Dendritic cell treated with granulocyte-macrophage colony-stimulating factor and Interleukin-4, amounts not matched to agents 40 ng/mL and 50 ng/mL, for 4 days (primary cell): ENCODE measurements at regions of chr4 and their contacts with region 1.

Region 1: DNA sequence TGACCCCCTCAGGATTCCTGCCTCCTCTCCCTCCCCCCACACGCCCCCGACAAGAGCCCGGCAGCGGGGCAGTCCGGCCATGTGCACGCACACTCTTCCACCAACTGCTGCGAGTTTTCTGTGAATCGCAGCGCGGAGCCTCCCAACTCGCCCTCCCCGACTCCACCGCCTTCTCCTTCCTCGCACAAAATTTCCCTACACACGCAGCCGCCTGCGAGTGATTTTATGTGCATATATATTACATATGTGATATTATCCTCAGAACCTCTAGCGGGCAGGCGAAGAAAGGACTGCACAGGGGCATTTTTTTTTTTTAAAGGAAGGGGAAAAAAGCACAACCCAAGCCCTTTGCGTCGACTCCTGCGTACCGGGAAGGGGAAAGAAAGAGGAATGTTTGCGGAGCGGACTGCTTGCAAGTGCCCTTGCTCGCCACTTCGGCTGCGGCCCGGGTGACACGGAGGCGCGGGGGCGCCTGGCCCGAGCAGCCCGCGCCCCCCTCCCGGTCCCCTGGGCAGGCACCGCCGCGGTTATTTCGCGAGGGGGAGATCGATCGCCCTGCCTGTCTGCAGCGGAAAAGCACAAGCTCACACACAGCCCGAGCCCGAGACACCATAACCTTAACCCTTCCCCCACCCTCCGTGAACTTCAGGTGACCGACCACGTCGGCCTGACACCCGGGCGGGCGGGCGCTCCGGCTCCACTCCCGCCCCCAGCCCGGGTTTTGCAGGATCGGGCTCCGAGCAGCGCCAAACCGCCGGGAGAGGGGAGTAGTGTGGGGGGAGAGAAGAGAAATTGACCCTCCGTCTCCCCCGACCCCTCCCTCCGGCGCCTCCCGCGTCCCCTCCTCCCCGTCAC is 2.3 kb downstream of the ZNF827 start:
- H3K4me3 Mint-ChIP-seq: peak overlapping the region; percentile 96
- H3K27ac Mint-ChIP-seq: peak overlapping the region; percentile 80
- H3K4me1 Mint-ChIP-seq: peaks cover 33% of the 10 kb centered on the region
- H3K27me3 Mint-ChIP-seq: peaks cover 49% of the 10 kb centered on the region

Region 2: GRCh38 chr4:145404761-145405160 is 531.6 kb before region 1 on chr4:
- intact Hi-C with region 1: no loop called
- H3K4me3 Mint-ChIP-seq: no peak overlapping the region
- H3K27ac Mint-ChIP-seq: no peak overlapping the region
- H3K4me1 Mint-ChIP-seq: no peaks in the 10 kb centered on the region
- H3K27me3 Mint-ChIP-seq: no peaks in the 10 kb centered on the region

Region 3: GRCh38 chr4:145618932-145619638 is 317.3 kb before region 1 on chr4 and contains the start of gene MMAA:
- intact Hi-C with region 1: loop called (anchors 2 kb)
- H3K4me3 Mint-ChIP-seq: peak within 1 kb of the TSS; percentile 97
- H3K27ac Mint-ChIP-seq: peak within 1 kb of the TSS; percentile 99
- H3K4me1 Mint-ChIP-seq: peaks cover 21% of the 10 kb centered on the region
- H3K27me3 Mint-ChIP-seq: no peaks in the 10 kb centered on the region

Region 4: GRCh38 chr4:145829629-145830395 is 106.6 kb before region 1 on chr4:
- intact Hi-C with region 1: loop called (anchors 10 kb)
- H3K4me3 Mint-ChIP-seq: no peak overlapping the region
- H3K27ac Mint-ChIP-seq: no peak overlapping the region
- H3K4me1 Mint-ChIP-seq: peaks cover 6% of the 10 kb centered on the region
- H3K27me3 Mint-ChIP-seq: no peaks in the 10 kb centered on the region